Panc1 (cell line): ENCODE measurements at regions of chr6 and their contacts with region 1.

Region 1: DNA sequence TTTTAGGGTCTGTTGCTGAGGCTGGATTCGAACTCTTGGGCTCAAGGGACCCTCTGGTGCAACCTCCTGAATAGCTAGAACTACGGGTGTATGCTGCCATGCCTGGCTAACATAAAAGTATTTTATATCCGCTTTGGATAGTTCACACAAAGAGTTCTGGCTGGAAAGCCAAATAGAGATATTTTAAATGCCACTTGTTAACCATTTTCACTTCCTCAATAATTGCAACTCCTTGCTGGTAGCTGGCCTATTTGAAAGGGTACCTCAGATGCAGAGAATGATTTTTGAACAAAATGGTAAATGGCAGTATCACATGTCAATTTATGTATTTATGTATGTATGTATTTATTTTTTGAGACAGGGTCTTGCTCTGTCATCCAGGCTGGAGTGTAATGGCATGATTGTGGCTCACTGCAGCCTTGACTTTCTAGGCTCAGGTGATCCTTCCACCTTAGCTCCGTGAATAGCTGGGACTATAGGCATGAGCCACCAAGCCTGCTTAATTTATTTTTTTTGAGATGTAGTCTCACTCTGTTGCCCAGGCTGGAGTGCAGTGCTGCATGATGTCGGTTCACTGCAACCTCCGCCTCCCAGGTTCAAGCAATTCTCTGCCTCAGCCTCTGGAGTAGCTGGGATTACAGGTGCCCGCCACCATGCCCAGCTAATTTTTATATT is 12.9 kb upstream of the JARID2 start:
- DNase-seq: no peak
- ATAC-seq: no peak
- H3K4me3 ChIP-seq: no peak overlapping the region
- H3K27ac ChIP-seq: no peak overlapping the region
- H3K4me1 ChIP-seq: no peaks in the 10 kb centered on the region
- H3K27me3 ChIP-seq: no peaks in the 10 kb centered on the region
- CTCF ChIP-seq: no peak

Region 2: DNA sequence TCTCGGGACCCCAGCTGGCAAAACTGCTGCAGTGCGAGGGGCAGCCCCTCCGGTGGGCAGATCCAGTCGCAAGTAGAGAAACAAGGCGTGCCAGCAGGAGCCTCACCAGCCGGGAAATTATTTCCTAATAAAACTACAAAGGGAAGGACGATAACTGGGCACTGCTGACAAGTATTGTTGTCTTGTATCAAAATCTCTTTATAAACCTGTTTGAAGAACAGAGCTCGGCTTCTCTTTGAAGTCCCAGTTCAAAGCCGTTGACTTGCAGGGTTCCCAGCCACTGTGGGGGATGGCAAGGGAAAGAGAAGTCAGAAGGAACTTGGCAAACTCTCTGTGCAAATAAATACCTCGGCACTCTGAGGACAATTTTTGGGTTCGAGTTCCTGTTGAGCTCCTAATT is 610.9 kb before region 1 on chr6:
- CTCF ChIA-PET with region 1: no interaction called
- POLR2A ChIA-PET with region 1: no interaction called
- in situ Hi-C with region 1: no loop called
- intact Hi-C with region 1: no loop called
- DNase-seq: no peak
- ATAC-seq: no peak
- H3K4me3 ChIP-seq: no peak overlapping the region
- H3K27ac ChIP-seq: no peak overlapping the region
- H3K4me1 ChIP-seq: no peaks in the 10 kb centered on the region
- H3K27me3 ChIP-seq: no peaks in the 10 kb centered on the region; the same call in 1 of the 2 replicates
- CTCF ChIP-seq: no peak

Region 3: DNA sequence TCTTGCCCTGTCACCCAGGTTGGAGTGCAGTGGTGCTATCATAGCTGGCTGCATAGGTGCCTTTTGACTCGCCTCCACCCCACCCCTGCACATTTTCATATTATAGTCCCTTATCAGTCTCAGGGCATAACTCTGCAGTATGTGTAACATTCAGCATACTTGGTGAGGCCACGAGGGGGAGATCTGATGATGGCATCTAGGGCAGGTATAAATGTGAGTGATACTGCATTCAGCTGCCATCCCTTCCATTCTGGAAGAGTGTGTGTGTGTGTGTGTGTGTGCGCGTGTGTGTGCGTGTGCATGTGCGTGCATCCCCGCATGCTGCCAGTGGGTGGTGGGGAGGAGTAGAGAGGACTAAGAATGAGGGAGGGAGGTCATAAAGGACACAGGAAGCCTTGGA is 94.3 kb after region 1 on chr6:
- CTCF ChIA-PET with region 1: no interaction called
- POLR2A ChIA-PET with region 1: no interaction called
- in situ Hi-C with region 1: no loop called
- intact Hi-C with region 1: no loop called
- DNase-seq: no peak
- ATAC-seq: peak; percentile 71; the same call in 1 of the 2 replicates
- H3K4me3 ChIP-seq: no peak overlapping the region
- H3K27ac ChIP-seq: no peak overlapping the region
- H3K4me1 ChIP-seq: no peaks in the 10 kb centered on the region
- H3K27me3 ChIP-seq: no peaks in the 10 kb centered on the region
- CTCF ChIP-seq: peak; percentile 33; the same call in 1 of the 2 replicates

Region 4: GRCh38 chr6:15378272-15378671 is 145.3 kb after region 1 on chr6:
- CTCF ChIA-PET with region 1: interaction called, 10 read pairs
- POLR2A ChIA-PET with region 1: no interaction called
- in situ Hi-C with region 1: no loop called
- intact Hi-C with region 1: no loop called
- DNase-seq: no peak
- ATAC-seq: no peak
- H3K4me3 ChIP-seq: no peak overlapping the region
- H3K27ac ChIP-seq: no peak overlapping the region
- H3K4me1 ChIP-seq: no peaks in the 10 kb centered on the region
- H3K27me3 ChIP-seq: no peaks in the 10 kb centered on the region
- CTCF ChIP-seq: no peak

Region 5: DNA sequence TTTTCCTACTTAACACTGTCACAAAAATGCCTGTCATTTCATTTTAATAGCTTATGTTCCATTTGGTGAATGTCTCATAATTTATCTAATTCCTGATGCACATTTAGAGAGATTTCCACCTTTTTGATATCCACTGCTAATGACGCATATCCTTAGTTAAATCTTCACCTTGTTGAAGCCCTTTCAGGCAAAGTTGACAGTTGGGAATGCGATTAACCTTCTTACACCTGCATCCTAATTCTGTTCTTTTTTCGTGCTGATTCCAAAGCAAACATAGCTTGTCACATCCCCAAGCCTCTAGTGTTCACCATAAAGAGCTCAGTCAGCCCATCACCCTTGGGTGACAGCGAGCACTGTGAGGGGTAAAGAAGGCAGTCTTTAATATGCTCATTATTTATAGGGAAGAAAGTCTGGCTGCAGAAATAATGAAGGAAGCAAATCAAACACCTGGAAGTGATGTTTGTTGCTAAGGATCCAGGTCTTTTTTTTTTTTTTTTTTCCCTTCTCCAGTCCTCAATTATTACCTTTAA is 224.2 kb after region 1 on chr6:
- CTCF ChIA-PET with region 1: interaction called, 13 read pairs
- POLR2A ChIA-PET with region 1: no interaction called
- in situ Hi-C with region 1: no loop called
- intact Hi-C with region 1: no loop called
- DNase-seq: no peak
- ATAC-seq: no peak
- H3K4me3 ChIP-seq: no peak overlapping the region
- H3K27ac ChIP-seq: no peak overlapping the region
- H3K4me1 ChIP-seq: no peaks in the 10 kb centered on the region
- H3K27me3 ChIP-seq: no peaks in the 10 kb centered on the region
- CTCF ChIP-seq: no peak